A549 (cell line): ENCODE measurements at regions of chr9 and their contacts with region 1.

Region 1: GRCh38 chr9:5186416-5187169 is 1.2 kb upstream of the INSL6 start:
- DNase-seq: peak; percentile 65 to 78
- ATAC-seq: peak; percentile 90 to 97
- H3K4me3 ChIP-seq: no peak overlapping the region
- H3K27ac ChIP-seq: no peak overlapping the region
- H3K4me1 ChIP-seq: no peaks in the 10 kb centered on the region
- CTCF ChIP-seq: peak; percentile 96
- EP300 ChIP-seq: no peak
- POLR2A ChIP-seq: no peak
- RAD21 ChIP-seq: peak; percentile 96

Region 2: DNA sequence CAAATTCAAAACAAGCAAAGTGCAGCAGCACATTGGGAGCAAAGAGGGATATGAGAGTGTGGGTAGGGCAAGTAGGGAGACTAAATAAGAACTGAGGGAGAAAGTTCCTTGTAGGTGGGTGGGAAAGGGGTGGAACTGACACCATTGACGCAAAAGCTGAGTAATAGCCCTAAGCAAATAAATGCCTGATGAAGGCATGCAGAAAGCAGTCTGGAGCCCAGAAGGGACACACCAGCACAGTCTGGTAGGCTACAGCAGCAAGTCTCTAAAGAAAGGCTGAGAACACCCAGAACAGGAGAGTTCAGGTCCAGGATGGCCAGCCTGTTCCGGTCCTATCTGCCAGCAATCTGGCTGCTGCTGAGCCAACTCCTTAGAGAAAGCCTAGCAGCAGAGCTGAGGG is 44.6 kb after region 1 on chr9 and contains the start of gene INSL4:
- CTCF ChIA-PET with region 1: interaction called, 11 read pairs
- POLR2A ChIA-PET with region 1: no interaction called
- DNase-seq: peak; percentile 58 to 93
- ATAC-seq: peak; percentile 97 to 98
- H3K4me3 ChIP-seq: peak within 1 kb of the TSS; percentile 37
- H3K27ac ChIP-seq: peak within 1 kb of the TSS; percentile 78 to 89
- H3K4me1 ChIP-seq: peaks cover 22% of the 10 kb centered on the region
- CTCF ChIP-seq: no peak
- EP300 ChIP-seq: peak in 1 of 2 experiments; percentile 48; a peak in 2 of 5 replicates
- POLR2A ChIP-seq: peak; percentile 76
- RAD21 ChIP-seq: 0 out of 5 replicates have a peak, but pooled peaks of 1 of the 2 experiments have one; percentile 8
- polyA plus RNA-seq, gene INSL4: 54.0 and 77.5 TPM in 2 replicates

Region 3: GRCh38 chr9:5268890-5269715 is 82.5 kb after region 1 on chr9:
- CTCF ChIA-PET with region 1: interaction called, 24 read pairs
- POLR2A ChIA-PET with region 1: no interaction called
- DNase-seq: no peak
- ATAC-seq: peak in 1 of 2 experiments; percentile 42; a peak in 3 of 6 replicates
- H3K4me3 ChIP-seq: no peak overlapping the region
- H3K27ac ChIP-seq: no peak overlapping the region
- H3K4me1 ChIP-seq: peaks cover 10% of the 10 kb centered on the region; the same call in 2 of the 3 replicates
- CTCF ChIP-seq: no peak
- EP300 ChIP-seq: no peak
- POLR2A ChIP-seq: no peak
- RAD21 ChIP-seq: no peak

Region 4: DNA sequence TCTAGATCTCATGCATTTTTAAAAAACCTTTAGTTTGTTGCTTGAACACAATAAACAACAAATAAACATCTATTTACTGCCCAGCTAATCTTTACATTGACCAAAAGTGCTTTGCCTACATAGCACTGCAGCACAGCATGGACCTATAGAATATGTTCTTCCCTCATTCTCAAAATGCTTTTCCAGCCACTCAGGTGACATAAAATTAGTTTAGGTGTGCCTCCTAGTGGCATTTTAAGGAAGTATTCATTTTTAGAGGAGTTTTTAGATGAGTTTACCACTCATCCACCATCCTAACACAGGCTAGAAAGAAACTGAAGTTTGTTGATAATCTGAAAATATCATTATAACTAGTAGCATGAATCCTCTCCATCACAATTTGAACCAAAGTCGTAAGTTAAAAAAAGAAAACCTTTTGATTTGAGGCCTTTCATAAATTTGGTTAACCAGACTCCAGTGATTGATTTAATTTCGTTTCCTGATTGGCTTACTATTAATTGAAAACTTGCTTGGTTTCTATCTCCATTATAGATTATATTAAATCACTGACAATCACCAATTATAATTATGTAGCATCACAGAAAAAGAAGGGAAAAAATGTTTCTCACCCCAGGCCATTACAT is 238.5 kb after region 1 on chr9:
- CTCF ChIA-PET with region 1: interaction called, 86 read pairs
- POLR2A ChIA-PET with region 1: no interaction called
- DNase-seq: peak; percentile 41 to 59
- ATAC-seq: peak; percentile 59 to 81; a peak in 5 of 6 replicates
- H3K4me3 ChIP-seq: no peak overlapping the region
- H3K27ac ChIP-seq: no peak overlapping the region
- H3K4me1 ChIP-seq: no peaks in the 10 kb centered on the region
- CTCF ChIP-seq: peak; percentile 75
- EP300 ChIP-seq: no peak
- POLR2A ChIP-seq: no peak
- RAD21 ChIP-seq: peak; percentile 81

Region 5: GRCh38 chr9:5450359-5451091 is 263.9 kb after region 1 on chr9 and contains the start of gene CD274:
- CTCF ChIA-PET with region 1: interaction called, 13 read pairs
- POLR2A ChIA-PET with region 1: no interaction called
- DNase-seq: peak; percentile 70 to 91
- ATAC-seq: peak; percentile 98 to 99
- H3K4me3 ChIP-seq: peak within 1 kb of the TSS; percentile 47
- H3K27ac ChIP-seq: peak within 1 kb of the TSS; percentile 69 to 84
- H3K4me1 ChIP-seq: peaks cover 54% of the 10 kb centered on the region
- CTCF ChIP-seq: peak; percentile 75
- EP300 ChIP-seq: no peak
- POLR2A ChIP-seq: peak; percentile 44
- RAD21 ChIP-seq: peak; percentile 80 to 83
- polyA plus RNA-seq, gene CD274: 6.4 and 6.8 TPM in 2 replicates

Region 6: GRCh38 chr9:5593904-5594303 is 407.3 kb after region 1 on chr9:
- CTCF ChIA-PET with region 1: interaction called, 59 read pairs
- POLR2A ChIA-PET with region 1: no interaction called
- DNase-seq: no peak
- ATAC-seq: no peak
- H3K4me3 ChIP-seq: no peak overlapping the region
- H3K27ac ChIP-seq: no peak overlapping the region
- H3K4me1 ChIP-seq: no peaks in the 10 kb centered on the region
- CTCF ChIP-seq: no peak
- EP300 ChIP-seq: no peak
- POLR2A ChIP-seq: no peak
- RAD21 ChIP-seq: no peak